ENCODE measurements at regions of chr11 and their contacts with region 1.

Region 1: DNA sequence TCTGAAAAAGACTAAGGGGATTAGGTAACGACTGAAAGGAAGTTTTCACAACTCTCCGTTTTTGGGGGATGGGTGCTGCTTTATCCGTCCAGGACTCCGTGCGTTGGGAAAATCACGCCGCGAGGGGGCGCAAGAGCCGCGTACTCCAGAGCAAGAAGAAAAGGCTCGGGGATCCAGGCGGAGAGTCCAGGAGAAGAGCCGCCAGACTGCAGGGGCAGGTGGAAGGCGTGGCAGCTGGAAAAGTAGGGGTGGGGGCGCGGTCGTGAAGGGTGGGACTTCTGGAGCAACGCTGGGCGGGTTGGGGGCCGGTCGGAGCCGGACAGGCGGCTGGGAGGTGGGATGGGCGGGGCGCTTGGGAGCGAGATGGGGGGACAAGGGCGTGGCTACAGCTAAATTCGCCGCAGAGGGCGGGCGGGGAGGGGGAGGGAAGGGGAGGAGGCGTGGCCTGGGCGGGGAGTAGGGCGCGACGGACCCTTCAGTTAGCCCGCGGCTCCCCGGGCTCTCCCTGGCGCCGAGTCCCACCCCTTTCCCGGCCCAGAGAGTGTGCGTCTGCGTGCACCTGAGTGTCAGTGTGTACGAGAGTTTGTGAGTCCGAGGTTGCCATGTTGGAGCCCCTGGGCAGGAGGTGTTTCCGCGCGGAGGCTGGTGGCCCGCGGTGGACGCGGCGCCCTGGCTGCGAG is 613 bp upstream of the ARHGEF17 start:
- DNase-seq: peak; percentile 73
- H3K4me3 ChIP-seq: peak overlapping the region; percentile 59 to 89 (median 72)
- H3K27ac ChIP-seq: peak overlapping the region; percentile 85 to 96 (median 88)
- H3K4me1 ChIP-seq: peaks cover 4 to 62% (median 36%) of the 10 kb centered on the region in 3 donors
- H3K27me3 ChIP-seq: peaks cover 0 to 18% (median 0%) of the 10 kb centered on the region in 4 donors
- CTCF ChIP-seq: peak; percentile 76 to 95 (median 90)
- POLR2A ChIP-seq: peak in 1 of 4 donors; percentile 43

Region 2: GRCh38 chr11:73141031-73141847 is 166.2 kb before region 1 on chr11:
- intact Hi-C with region 1: no loop called
- DNase-seq: no peak
- H3K4me3 ChIP-seq: peak overlapping the region; percentile 61 to 98 (median 90)
- H3K27ac ChIP-seq: peak overlapping the region; percentile 90 to 99 (median 94)
- H3K4me1 ChIP-seq: peaks cover 6 to 65% (median 14%) of the 10 kb centered on the region in 3 donors
- H3K27me3 ChIP-seq: no peaks in the 10 kb centered on the region
- CTCF ChIP-seq: no peak
- POLR2A ChIP-seq: peak in 1 of 4 donors; percentile 14

Region 3: DNA sequence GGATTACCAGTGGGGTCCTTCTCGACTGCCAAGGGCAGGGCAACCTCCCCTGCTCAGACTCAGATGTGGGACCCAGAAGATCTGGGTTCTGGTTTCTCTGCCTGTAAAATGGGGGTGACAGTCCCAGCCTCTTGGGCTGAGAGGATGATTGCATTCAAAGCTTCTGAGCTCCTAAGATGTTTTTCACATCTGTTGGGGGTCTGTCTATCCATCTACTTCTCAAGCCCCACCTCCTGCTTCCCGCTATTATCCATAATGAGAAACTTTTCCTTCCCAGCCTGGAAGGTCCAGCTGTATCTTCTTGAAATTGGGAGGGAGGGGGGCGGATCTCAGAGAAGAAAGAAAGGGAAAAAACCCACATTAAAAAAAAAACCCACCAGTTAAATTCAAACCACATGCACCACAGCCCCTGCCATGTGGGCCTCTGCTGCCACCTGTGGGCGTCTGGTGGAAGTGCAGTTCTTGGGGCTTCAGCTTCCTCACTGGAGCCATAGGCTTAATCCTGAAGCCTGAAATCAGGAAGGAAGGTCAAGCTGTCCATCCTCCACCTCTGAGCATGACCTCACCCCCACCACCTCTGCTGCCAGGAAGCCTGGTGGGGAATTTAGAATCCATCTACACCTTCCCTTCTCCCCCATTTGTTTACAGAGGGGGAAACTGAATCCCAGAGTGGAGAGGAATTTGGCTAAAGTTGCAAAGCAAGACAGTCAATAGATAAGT is 27.9 kb after region 1 on chr11:
- intact Hi-C with region 1: loop called (anchors 2 kb)
- DNase-seq: no peak
- H3K4me3 ChIP-seq: no peak overlapping the region
- H3K27ac ChIP-seq: peak overlapping the region; percentile 27 to 81 (median 50)
- H3K4me1 ChIP-seq: peaks cover 10 to 78% (median 37%) of the 10 kb centered on the region in 3 donors
- H3K27me3 ChIP-seq: no peaks in the 10 kb centered on the region
- CTCF ChIP-seq: peak; percentile 89 to 100 (median 93)
- POLR2A ChIP-seq: no peak